H1 (cell line): ENCODE measurements at regions of chr17 and their contacts with region 1.

Region 1: DNA sequence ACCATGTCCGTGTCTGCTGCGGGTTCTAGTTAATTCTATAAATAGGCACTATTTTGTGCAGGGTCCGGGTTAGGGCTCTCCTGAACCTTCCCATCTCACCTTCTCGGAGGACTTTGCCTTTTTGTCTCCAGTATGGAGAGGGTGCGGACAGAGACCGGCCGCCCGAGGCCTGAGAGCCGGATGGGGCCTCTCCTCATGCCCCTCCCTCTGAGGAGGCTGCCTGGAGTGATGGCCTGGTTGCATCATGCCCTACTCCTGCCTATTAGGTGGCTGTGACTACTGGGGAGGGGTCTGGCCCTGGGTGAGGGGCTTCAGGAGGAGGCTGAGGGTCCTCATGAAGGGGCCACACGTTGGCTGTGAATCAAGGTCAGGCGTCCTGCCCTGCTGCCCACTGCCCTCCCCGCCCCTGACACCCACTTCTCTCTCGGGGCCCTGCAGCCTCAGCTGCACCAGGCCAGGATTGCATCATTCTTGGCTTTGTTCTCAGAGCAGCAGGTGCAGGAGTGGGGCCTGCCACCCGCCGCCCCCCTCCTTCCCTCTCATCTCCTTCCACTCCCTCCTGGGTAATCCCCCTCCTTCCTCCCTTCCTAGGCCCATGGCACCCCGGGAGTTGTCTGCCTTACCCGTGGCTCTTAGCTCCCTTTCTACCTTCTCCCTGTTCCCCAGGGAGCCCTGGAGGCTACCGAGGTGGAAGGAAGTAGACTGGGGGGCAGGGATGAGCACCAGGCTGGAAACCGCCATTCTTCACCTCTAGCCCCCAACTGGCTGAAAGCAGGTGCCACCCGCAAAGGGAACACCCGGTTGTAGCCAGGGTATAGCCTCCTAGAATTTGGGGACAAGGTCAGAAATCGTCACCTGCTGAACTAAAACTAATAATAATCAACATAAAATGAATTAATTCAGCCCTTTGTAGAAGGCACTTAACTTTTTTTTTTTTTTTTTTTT is 12.7 kb upstream of the ARHGAP23 start:
- DNase-seq: peak in 1 of 2 experiments; percentile 86
- H3K4me3 ChIP-seq: peak overlapping the region in 3 of 4 experiments; percentile 20 to 55 (median 39); a peak in 6 of 8 replicates
- H3K27ac ChIP-seq: peak overlapping the region; percentile 94
- H3K4me1 ChIP-seq: peaks cover 4 to 44% (median 37%) of the 10 kb centered on the region in 4 experiments
- H3K27me3 ChIP-seq: peaks cover 0 to 19% (median 7%) of the 10 kb centered on the region in 4 experiments; a peak in 4 of 7 replicates
- CTCF ChIP-seq: no peak; a peak in 1 of 4 replicates
- EP300 ChIP-seq: peak in 1 of 2 experiments; percentile 57; a peak in 1 of 3 replicates
- POLR2A ChIP-seq: peak in 1 of 2 experiments; percentile 74; a peak in 2 of 3 replicates
- RAD21 ChIP-seq: no peak

Region 2: DNA sequence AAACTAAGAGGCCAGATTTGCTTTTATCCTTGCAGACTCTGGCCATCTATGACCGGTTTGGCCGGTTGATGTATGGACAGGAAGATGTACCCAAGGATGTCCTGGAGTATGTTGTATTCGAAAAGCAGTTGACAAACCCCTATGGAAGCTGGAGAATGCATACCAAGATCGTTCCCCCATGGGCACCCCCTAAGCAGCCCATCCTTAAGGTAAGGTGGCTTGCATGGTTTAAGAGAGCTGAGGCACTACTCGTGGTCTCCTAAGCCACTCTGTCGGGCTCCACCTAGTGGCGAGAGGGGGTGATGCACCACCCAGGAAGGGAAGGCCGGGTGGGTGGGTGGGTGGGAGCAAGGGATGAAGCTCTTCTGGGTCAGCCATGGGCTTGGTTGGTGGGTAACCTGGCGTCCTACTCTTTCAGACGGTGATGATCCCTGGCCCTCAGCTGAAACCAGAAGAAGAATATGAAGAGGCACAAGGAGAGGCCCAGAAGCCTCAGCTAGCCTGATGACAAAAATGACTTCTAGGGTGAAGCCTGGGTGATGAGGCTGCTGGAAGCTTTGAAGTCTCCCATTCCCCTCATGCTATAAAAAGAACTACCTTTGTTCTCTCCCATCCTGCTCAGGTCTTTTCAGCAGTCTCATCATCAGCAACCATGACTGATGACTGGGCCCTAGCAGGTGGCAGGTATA is 93.3 kb before region 1 on chr17:
- CTCF ChIA-PET with region 1: interaction called, 29 read pairs
- POLR2A ChIA-PET with region 1: interaction called, 28 read pairs
- DNase-seq: peak in 1 of 2 experiments; percentile 91
- H3K4me3 ChIP-seq: no peak overlapping the region
- H3K27ac ChIP-seq: no peak overlapping the region
- H3K4me1 ChIP-seq: peaks cover 0 to 10% (median 7%) of the 10 kb centered on the region in 4 experiments; a peak in 4 of 7 replicates
- H3K27me3 ChIP-seq: no peaks in the 10 kb centered on the region
- CTCF ChIP-seq: peak; percentile 58 to 80 (median 70); a peak in 3 of 4 replicates
- EP300 ChIP-seq: no peak
- POLR2A ChIP-seq: no peak
- RAD21 ChIP-seq: peak in 1 of 2 experiments; percentile 53; a peak in 2 of 4 replicates

Region 3: DNA sequence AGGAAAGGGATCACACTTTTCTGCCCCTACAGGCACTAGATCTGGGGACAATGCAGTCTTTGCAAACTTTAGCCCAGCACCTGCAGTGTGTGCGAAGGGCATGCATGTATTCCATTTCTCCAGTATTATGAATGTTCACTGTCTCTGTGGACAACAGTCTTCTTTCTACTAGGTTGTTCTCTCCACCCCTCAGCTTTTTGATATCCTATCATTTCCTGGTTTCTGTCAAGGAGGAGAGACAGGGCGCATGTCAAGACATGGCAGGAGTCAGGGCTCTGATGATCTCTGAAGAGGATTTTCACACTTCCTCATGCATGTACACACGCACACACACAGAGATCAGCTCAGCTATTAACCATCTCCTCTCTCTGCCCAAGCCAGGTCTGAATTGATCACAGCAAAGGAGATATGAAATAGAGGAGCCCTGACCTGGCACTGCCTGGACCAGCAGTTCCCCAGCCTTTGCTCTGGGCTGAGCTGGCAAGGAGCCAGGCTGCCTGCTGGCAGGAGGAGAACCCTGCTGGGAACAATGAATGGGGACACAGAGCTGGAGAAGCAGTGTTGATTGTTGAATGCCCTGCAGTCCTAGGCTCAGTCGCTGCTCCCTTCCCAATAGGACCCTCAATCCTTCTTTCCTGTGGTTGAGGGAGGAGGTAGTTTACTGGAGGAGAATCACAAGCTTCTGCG is 74.3 kb before region 1 on chr17:
- CTCF ChIA-PET with region 1: interaction called, 400 read pairs
- POLR2A ChIA-PET with region 1: interaction called, 11 read pairs
- DNase-seq: peak in 1 of 2 experiments; percentile 17
- H3K4me3 ChIP-seq: no peak overlapping the region
- H3K27ac ChIP-seq: no peak overlapping the region
- H3K4me1 ChIP-seq: peaks cover 0 to 9% (median 3%) of the 10 kb centered on the region in 4 experiments; a peak in 3 of 7 replicates
- H3K27me3 ChIP-seq: no peaks in the 10 kb centered on the region
- CTCF ChIP-seq: no peak
- EP300 ChIP-seq: no peak
- POLR2A ChIP-seq: no peak
- RAD21 ChIP-seq: no peak

Region 4: DNA sequence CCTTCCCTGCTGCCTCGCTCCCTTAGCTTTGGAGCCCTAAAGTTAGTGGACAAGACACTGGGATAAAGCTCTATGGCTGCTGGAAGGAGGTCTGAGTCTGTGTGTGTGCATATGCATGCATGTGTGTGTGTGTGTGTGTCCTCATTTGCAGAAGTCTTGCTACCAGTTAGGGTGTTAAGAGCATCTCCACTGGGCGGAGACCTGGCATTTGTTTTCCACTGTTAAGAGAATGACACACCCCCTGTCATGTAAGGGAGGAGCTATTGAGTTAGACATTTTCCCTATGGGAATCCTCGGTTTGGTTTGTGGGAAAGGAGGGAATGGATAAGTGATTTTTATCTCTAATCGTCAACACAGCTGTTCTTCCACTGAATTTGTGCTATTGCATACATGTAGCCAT is 12.0 kb before region 1 on chr17:
- CTCF ChIA-PET with region 1: interaction called, 43 read pairs
- POLR2A ChIA-PET with region 1: interaction called, 77 read pairs
- DNase-seq: no peak
- H3K4me3 ChIP-seq: peak overlapping the region in 1 of 4 experiments; percentile 23; a peak in 1 of 8 replicates
- H3K27ac ChIP-seq: no peak overlapping the region; the same call in 1 of the 2 replicates
- H3K4me1 ChIP-seq: peaks cover 13 to 27% (median 19%) of the 10 kb centered on the region in 4 experiments
- H3K27me3 ChIP-seq: no peaks in the 10 kb centered on the region
- CTCF ChIP-seq: no peak
- EP300 ChIP-seq: no peak
- POLR2A ChIP-seq: no peak
- RAD21 ChIP-seq: no peak

Region 5: DNA sequence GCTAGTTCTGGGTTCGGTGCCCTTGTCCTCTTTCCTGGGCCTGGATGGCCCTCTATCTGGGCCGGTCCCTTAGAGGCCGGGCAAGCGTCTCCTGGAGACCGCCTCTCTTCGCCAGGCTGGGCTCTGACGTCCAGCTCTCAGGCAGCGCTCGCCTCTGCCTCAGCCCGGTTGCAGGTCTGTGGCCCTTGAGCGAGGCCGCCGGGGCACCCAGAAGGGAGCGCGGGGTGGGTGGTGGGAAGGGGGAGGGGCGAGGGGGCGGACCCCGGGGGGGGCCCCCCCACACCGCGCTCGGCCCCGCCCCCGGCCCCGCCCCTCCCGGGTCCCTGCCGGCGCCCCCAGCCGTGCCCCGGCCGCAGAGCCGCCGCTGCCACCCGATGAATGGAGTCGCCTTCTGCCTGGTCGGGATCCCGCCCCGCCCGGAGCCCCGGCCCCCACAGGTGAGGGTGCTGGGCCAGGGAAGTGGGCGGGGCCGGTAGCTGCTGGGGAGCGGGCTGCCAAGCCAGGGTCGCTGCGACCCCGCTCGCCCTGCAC is 12.7 kb after region 1 on chr17 and contains the start of gene ARHGAP23:
- CTCF ChIA-PET with region 1: interaction called, 13 read pairs
- POLR2A ChIA-PET with region 1: interaction called, 9 read pairs
- DNase-seq: peak in 1 of 2 experiments; percentile 67
- H3K4me3 ChIP-seq: peak within 1 kb of the TSS; percentile 66 to 91 (median 72)
- H3K27ac ChIP-seq: no peak within 1 kb of the TSS; the same call in 1 of the 2 replicates
- H3K4me1 ChIP-seq: peaks cover 22 to 35% (median 25%) of the 10 kb centered on the region in 4 experiments
- H3K27me3 ChIP-seq: no peaks in the 10 kb centered on the region
- CTCF ChIP-seq: no peak
- EP300 ChIP-seq: no peak
- POLR2A ChIP-seq: no peak
- RAD21 ChIP-seq: peak in 1 of 2 experiments; percentile 1; a peak in 1 of 4 replicates
- total RNA-seq, gene ARHGAP23: 107 and 108 TPM in 2 replicates